Activated CD4-positive, alpha-beta memory T cell treated with anti-CD3 and anti-CD28 coated beads for 36 hours (primary cell): ENCODE measurements at regions of chr3 and their contacts with region 1.

Region 1: DNA sequence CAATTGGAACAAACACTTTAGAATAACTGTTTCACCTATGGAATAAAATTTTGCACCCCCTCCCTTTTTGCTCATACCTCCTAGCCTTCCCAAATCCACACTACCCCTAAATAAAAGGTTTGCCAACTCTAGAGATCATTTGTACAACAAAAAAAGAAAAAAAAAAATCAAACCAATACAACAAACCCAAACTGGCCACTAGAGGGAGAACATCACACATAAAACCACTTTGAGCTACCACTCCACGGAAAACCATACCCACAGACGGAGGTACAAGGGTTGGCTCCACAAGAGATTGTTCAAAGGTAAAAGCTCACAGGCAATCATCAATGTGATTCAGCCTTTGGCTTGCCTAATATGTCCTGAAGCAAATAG is 47.6 kb downstream of the SETMAR start:
- DNase-seq: peak; percentile 53
- H3K4me3 Mint-ChIP-seq: peak overlapping the region; percentile 45
- H3K27ac Mint-ChIP-seq: peak overlapping the region; percentile 92
- H3K4me1 Mint-ChIP-seq: peaks cover 21% of the 10 kb centered on the region
- H3K27me3 Mint-ChIP-seq: no peaks in the 10 kb centered on the region

Region 2: GRCh38 chr3:4340411-4341335 is 10.1 kb before region 1 on chr3:
- CTCF ChIA-PET with region 1: interaction called, 12 read pairs
- POLR2A ChIA-PET with region 1: no interaction called
- intact Hi-C with region 1: no loop called
- DNase-seq: no peak
- H3K4me3 Mint-ChIP-seq: no peak overlapping the region
- H3K27ac Mint-ChIP-seq: no peak overlapping the region
- H3K4me1 Mint-ChIP-seq: no peaks in the 10 kb centered on the region
- H3K27me3 Mint-ChIP-seq: no peaks in the 10 kb centered on the region

Region 3: GRCh38 chr3:4421121-4421520 is 70.3 kb after region 1 on chr3:
- CTCF ChIA-PET with region 1: interaction called, 13 read pairs
- POLR2A ChIA-PET with region 1: interaction called, 3 read pairs
- intact Hi-C with region 1: loop called (anchors 1 kb)
- DNase-seq: peak; percentile 60
- H3K4me3 Mint-ChIP-seq: no peak overlapping the region
- H3K27ac Mint-ChIP-seq: peak overlapping the region; percentile 56
- H3K4me1 Mint-ChIP-seq: peaks cover 53% of the 10 kb centered on the region
- H3K27me3 Mint-ChIP-seq: no peaks in the 10 kb centered on the region

Region 4: DNA sequence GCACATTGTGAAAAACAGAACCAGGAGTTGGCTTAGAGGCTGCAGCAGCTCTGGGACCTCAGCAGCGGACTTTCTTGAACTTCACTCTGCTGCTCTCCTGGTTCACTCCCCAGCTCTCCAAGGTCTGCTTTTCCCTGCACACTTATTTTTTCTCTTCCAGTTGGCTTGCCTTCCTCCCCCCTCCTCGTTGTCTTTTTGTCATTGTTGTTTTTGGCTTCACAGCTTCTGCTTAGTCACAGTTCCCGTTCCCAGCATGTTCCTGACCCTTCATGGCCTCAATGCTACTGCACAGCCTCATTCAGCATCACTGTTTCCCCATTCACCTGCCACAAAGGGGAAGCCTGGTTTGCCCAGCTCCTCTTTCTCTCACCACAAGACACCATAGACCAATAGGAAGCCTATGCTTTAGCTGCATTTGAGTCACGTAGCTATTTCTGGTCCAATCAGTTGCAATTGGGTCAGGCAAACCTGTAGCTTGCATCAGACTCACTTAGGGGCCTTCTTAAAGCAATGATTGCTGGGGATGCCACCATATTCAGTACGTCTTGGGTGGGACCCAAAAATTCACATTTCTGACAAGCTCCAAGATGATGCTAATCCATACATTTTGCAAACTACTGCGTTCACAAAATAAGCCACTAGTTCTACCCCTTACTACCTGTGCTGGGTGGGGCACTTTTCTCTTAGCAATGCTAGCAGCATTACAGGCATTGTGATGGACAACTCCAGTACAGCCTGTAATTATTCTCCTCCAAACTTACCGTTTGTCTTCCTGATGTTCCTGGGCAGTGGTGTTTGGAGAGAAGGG is 124.1 kb after region 1 on chr3:
- CTCF ChIA-PET with region 1: interaction called, 7 read pairs
- POLR2A ChIA-PET with region 1: no interaction called
- intact Hi-C with region 1: loop called (anchors 2 kb)
- DNase-seq: peak; percentile 70
- H3K4me3 Mint-ChIP-seq: peak overlapping the region; percentile 14
- H3K27ac Mint-ChIP-seq: peak overlapping the region; percentile 14
- H3K4me1 Mint-ChIP-seq: peaks cover 9% of the 10 kb centered on the region
- H3K27me3 Mint-ChIP-seq: peaks cover 18% of the 10 kb centered on the region

Region 5: GRCh38 chr3:4524088-4525023 is 173.6 kb after region 1 on chr3:
- CTCF ChIA-PET with region 1: interaction called, 24 read pairs
- POLR2A ChIA-PET with region 1: interaction called, 4 read pairs
- intact Hi-C with region 1: loop called (anchors 1 kb)
- DNase-seq: no peak
- H3K4me3 Mint-ChIP-seq: no peak overlapping the region
- H3K27ac Mint-ChIP-seq: no peak overlapping the region
- H3K4me1 Mint-ChIP-seq: peaks cover 5% of the 10 kb centered on the region
- H3K27me3 Mint-ChIP-seq: no peaks in the 10 kb centered on the region

Region 6: GRCh38 chr3:4712143-4712542 is 361.4 kb after region 1 on chr3:
- CTCF ChIA-PET with region 1: interaction called, 13 read pairs
- POLR2A ChIA-PET with region 1: no interaction called
- intact Hi-C with region 1: no loop called
- DNase-seq: no peak
- H3K4me3 Mint-ChIP-seq: no peak overlapping the region
- H3K27ac Mint-ChIP-seq: no peak overlapping the region
- H3K4me1 Mint-ChIP-seq: peaks cover 1% of the 10 kb centered on the region
- H3K27me3 Mint-ChIP-seq: no peaks in the 10 kb centered on the region